HCT116 (cell line): ENCODE measurements at regions of chr11 and their contacts with region 1.

Region 1: GRCh38 chr11:65615229-65615941 is at the start of gene PCNX3:
- DNase-seq: peak; percentile 100
- ATAC-seq: peak; percentile 86
- H3K4me3 ChIP-seq: peak within 1 kb of the TSS; percentile 86 to 98
- H3K27ac ChIP-seq: peak within 1 kb of the TSS; percentile 86
- H3K4me1 ChIP-seq: peaks cover 10 to 43% of the 10 kb centered on the region in 2 experiments
- H3K27me3 ChIP-seq: no peaks in the 10 kb centered on the region
- CTCF ChIP-seq: no peak
- POLR2A ChIP-seq: no peak
- RAD21 ChIP-seq: no peak
- total RNA-seq, gene PCNX3: 50.4 TPM

Region 2: DNA sequence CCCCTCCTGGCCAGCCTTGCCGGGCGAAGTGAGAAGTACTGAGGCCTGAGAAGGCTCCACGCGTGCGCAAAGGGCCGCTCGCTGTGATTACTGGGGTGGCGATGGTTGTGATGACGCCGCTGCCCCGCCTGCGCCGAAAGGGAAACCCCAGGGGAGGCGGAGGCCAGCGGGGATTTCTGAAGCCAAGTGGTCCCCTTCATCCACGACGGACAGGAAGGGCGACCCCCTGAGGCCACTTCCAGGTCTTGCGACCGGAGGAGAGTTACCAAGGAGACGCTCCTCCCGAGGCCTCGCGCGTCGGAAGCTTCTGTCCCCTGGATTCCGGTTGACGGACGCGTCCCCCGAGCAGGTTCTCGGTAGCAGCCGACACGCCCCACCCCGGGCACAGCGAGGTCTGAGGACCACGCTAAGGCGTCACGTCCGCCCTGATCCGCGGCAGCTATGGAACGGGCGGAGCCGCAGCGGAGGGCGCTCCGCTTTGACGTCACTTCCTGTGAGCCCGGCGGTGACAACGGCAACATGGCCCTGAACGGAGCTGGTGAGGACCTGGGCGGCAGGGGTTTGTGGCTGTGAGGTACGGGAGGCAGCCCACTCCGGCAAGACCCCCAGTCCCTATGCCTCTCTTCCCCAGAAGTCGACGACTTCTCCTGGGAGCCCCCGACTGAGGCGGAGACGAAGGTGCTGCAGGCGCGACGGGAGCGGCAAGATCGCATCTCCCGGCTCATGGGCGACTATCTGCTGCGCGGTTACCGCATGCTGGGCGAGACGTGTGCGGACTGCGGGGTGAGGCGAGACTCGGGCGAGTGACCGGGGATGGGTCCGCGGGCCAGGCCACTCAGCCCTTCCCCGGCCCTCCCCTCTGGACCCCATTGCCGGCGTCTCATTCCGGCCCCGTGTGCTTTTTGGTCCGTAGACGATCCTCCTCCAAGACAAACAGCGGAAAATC is 45.1 kb before region 1 on chr11 and contains the start of gene ZNRD2:
- CTCF ChIA-PET with region 1: interaction called, 12 read pairs
- POLR2A ChIA-PET with region 1: interaction called, 5 read pairs
- RAD21 ChIA-PET with region 1: no interaction called
- intact Hi-C with region 1: no loop called
- DNase-seq: peak; percentile 97
- ATAC-seq: peak; percentile 72
- H3K4me3 ChIP-seq: peak within 1 kb of the TSS; percentile 97 to 100
- H3K27ac ChIP-seq: peak within 1 kb of the TSS; percentile 94
- H3K4me1 ChIP-seq: peaks cover 35 to 68% of the 10 kb centered on the region in 2 experiments
- H3K27me3 ChIP-seq: no peaks in the 10 kb centered on the region
- CTCF ChIP-seq: peak in 1 of 3 experiments; percentile 29; a peak in 2 of 6 replicates
- POLR2A ChIP-seq: peak; percentile 36
- RAD21 ChIP-seq: no peak
- total RNA-seq, gene ZNRD2: 66.8 TPM

Region 3: GRCh38 chr11:65575568-65576231 is 39.7 kb before region 1 on chr11 and contains the start of gene EHBP1L1:
- CTCF ChIA-PET with region 1: interaction called, 12 read pairs
- POLR2A ChIA-PET with region 1: interaction called, 5 read pairs
- RAD21 ChIA-PET with region 1: no interaction called
- intact Hi-C with region 1: loop called (anchors 2 kb)
- DNase-seq: no peak
- ATAC-seq: peak; percentile 33
- H3K4me3 ChIP-seq: peak within 1 kb of the TSS; percentile 74 to 78
- H3K27ac ChIP-seq: peak within 1 kb of the TSS; percentile 97
- H3K4me1 ChIP-seq: peaks cover 47 to 62% of the 10 kb centered on the region in 2 experiments
- H3K27me3 ChIP-seq: no peaks in the 10 kb centered on the region
- CTCF ChIP-seq: no peak
- POLR2A ChIP-seq: peak; percentile 29
- RAD21 ChIP-seq: no peak
- total RNA-seq, gene EHBP1L1: 105 TPM

Region 4: DNA sequence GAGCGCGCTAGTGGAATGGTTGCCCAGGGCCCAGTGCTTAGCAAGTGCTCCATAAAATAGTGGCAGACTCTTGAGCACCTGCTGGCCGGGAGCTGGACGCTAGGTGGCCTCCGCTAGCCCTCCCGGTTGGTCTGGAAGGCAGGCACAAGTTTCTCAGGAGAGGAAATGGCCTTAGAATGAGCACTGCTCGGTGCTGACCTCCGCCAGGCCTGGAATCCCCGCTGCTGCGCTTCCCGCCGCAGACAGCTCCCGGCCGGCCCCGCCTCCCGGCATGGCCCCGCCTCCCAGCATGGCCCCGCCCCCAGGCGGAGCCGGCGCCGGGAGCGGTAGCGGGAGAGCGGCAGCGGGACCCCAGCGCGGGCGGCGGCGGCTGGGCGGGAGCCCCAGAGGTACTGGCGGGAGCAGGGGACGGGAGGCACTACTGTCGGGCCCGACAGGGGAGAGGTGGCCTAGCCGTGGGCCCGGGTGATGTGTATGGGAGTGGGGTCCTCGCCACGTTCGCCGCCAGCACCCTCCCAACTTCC is 22.5 kb after region 1 on chr11 and contains the start of gene SIPA1:
- CTCF ChIA-PET with region 1: interaction called, 6 read pairs
- POLR2A ChIA-PET with region 1: interaction called, 11 read pairs
- RAD21 ChIA-PET with region 1: no interaction called
- intact Hi-C with region 1: no loop called
- DNase-seq: peak; percentile 73
- ATAC-seq: peak; percentile 85
- H3K4me3 ChIP-seq: peak within 1 kb of the TSS; percentile 73 to 85
- H3K27ac ChIP-seq: peak within 1 kb of the TSS; percentile 97
- H3K4me1 ChIP-seq: peaks cover 11 to 37% of the 10 kb centered on the region in 2 experiments
- H3K27me3 ChIP-seq: no peaks in the 10 kb centered on the region
- CTCF ChIP-seq: peak in 2 of 3 experiments; percentile 40 to 51; a peak in 4 of 6 replicates
- POLR2A ChIP-seq: peak; percentile 52
- RAD21 ChIP-seq: no peak
- total RNA-seq, gene SIPA1: 105 TPM

Region 5: DNA sequence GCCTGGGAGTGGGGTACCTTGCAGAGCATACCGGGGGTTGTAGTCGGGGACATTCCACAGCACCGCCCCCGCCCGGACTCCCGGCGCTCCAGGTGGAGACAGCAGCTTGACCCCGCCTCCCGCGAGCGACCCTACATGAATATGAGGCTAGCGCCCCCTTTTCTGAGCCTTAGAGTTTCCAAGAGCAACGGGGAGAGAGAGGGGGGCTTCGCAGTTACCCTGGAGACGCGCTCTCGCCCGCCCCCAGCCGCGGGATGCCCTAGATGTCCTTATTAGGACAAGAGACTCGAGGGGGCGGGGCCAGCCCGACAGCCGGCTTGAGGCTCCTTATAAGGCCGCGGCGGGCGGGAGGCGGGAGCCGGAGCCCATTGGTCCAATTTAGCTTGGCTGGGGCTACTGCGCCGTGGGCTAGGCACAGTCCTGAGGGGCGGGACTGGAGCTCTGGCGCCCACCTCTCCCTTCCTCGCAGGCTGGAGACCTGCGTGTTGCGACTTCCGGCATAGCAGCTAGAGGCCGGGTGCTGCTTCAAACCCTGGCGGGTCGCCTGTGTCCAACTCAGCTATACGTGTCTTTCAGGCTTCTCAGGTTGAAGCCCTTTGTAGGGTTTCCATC is 243.9 kb after region 1 on chr11:
- CTCF ChIA-PET with region 1: interaction called, 6 read pairs
- POLR2A ChIA-PET with region 1: interaction called, 4 read pairs
- RAD21 ChIA-PET with region 1: interaction called in 1 of 2 experiments, 3 read pairs
- intact Hi-C with region 1: loop called (anchors 1 kb)
- DNase-seq: peak; percentile 95
- ATAC-seq: peak; percentile 66
- H3K4me3 ChIP-seq: peak overlapping the region; percentile 85 to 100
- H3K27ac ChIP-seq: peak overlapping the region; percentile 97
- H3K4me1 ChIP-seq: peaks cover 23 to 44% of the 10 kb centered on the region in 2 experiments
- H3K27me3 ChIP-seq: no peaks in the 10 kb centered on the region
- CTCF ChIP-seq: no peak
- POLR2A ChIP-seq: peak; percentile 78
- RAD21 ChIP-seq: no peak

Region 6: DNA sequence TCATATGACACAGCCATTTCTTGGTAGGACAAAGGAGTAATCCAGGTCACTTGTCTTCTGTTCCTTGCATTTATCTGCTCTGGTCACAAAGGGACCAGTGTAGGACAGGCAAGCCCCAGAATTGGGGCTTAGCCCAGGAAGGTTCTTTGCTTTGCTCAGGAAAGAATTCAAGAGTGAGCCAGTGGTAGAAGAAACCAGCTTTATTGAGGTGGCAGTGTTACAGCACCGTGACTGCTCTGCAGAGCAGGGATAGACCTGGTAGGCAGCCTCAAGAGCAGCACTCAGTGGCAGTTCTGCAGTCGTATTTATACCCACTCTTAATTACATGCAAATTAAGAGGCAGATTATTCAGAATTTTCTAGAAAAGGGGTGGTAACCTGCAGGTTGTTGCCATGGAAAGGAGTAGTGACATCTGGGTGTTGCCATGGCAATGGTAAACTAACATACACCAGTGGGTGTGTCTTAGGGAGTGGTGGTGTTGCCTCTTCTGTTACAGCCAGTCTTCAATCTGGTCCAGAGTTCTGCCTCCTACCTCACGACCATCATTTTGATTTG is 568.2 kb after region 1 on chr11:
- CTCF ChIA-PET with region 1: no interaction called
- POLR2A ChIA-PET with region 1: no interaction called
- RAD21 ChIA-PET with region 1: no interaction called
- intact Hi-C with region 1: no loop called
- DNase-seq: no peak
- ATAC-seq: peak; percentile 25; the same call in 1 of the 2 replicates
- H3K4me3 ChIP-seq: no peak overlapping the region
- H3K27ac ChIP-seq: no peak overlapping the region
- H3K4me1 ChIP-seq: peaks cover 0 to 5% of the 10 kb centered on the region in 2 experiments; a peak in 2 of 4 replicates
- H3K27me3 ChIP-seq: no peaks in the 10 kb centered on the region
- CTCF ChIP-seq: no peak
- POLR2A ChIP-seq: no peak
- RAD21 ChIP-seq: no peak